Heart right ventricle (tissue), 16 donors: ENCODE measurements at regions of chr9 and their contacts with region 1.

Region 1: GRCh38 chr9:118984607-118985006 is 384.6 kb downstream of the BRINP1 start:
- DNase-seq: no peak
- ATAC-seq: no peak
- H3K4me3 ChIP-seq: no peak overlapping the region
- H3K27ac ChIP-seq: no peak overlapping the region
- H3K4me1 ChIP-seq: peaks cover 0 to 6% (median 0%) of the 10 kb centered on the region in 9 donors
- H3K27me3 ChIP-seq: no peaks in the 10 kb centered on the region
- CTCF ChIP-seq: no peak

Region 2: GRCh38 chr9:117612317-117612716 is 1372.3 kb before region 1 on chr9:
- intact Hi-C with region 1: loop called in 1 of 10 experiments (anchors 5 kb)
- DNase-seq: no peak
- ATAC-seq: no peak
- H3K4me3 ChIP-seq: no peak overlapping the region
- H3K27ac ChIP-seq: no peak overlapping the region
- H3K4me1 ChIP-seq: no peaks in the 10 kb centered on the region
- H3K27me3 ChIP-seq: peaks cover 0 to 12% (median 0%) of the 10 kb centered on the region in 7 donors
- CTCF ChIP-seq: no peak